Activated CD8-positive, alpha-beta T cell treated with anti-CD3 and anti-CD28 coated beads, Interleukin-2, amount 10 ng/mL, durations not matched to agents 7 days and 5 days (primary cell): ENCODE measurements at regions of chr12 and their contacts with region 1.

Region 1: GRCh38 chr12:57175428-57176138 is 28.2 kb upstream of the LRP1-AS start:
- DNase-seq: peak; percentile 55
- ATAC-seq: peak; percentile 45
- H3K4me3 Mint-ChIP-seq: no peak overlapping the region
- H3K27ac Mint-ChIP-seq: no peak overlapping the region
- H3K4me1 Mint-ChIP-seq: no peaks in the 10 kb centered on the region
- H3K27me3 Mint-ChIP-seq: no peaks in the 10 kb centered on the region

Region 2: DNA sequence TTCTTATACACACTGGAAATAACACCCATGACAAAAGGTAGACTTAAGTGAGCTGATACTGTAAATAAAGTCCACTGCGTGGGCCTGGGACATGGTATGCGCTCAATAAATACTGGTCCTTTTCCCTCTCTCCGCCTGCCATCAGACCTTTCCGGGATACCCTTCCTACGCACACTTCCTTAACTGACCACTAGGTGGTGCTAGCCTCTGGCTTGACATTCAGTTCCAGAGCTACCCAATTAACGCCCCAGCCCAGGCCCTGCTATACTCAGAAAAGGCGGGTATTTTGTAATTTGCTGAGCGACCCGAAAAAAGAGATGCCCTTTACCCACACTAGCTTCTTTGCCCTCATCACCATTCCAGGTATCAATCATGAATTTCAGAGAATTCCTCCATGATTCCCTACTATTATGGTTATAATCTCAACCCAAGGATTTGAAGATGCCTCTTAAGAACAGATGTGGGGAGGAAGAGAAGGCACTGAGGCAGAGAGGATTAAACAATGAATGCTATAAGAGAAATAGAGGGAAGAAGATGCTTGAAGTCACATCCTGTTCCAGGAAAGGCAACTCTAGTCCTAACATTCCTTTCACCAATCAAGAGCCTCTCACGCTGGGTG is 51.2 kb before region 1 on chr12:
- CTCF ChIA-PET with region 1: interaction called, 178 read pairs
- POLR2A ChIA-PET with region 1: no interaction called
- DNase-seq: peak; percentile 85
- ATAC-seq: peak; percentile 65
- H3K4me3 Mint-ChIP-seq: no peak overlapping the region
- H3K27ac Mint-ChIP-seq: no peak overlapping the region
- H3K4me1 Mint-ChIP-seq: peaks cover 5% of the 10 kb centered on the region
- H3K27me3 Mint-ChIP-seq: peaks cover 29% of the 10 kb centered on the region

Region 3: DNA sequence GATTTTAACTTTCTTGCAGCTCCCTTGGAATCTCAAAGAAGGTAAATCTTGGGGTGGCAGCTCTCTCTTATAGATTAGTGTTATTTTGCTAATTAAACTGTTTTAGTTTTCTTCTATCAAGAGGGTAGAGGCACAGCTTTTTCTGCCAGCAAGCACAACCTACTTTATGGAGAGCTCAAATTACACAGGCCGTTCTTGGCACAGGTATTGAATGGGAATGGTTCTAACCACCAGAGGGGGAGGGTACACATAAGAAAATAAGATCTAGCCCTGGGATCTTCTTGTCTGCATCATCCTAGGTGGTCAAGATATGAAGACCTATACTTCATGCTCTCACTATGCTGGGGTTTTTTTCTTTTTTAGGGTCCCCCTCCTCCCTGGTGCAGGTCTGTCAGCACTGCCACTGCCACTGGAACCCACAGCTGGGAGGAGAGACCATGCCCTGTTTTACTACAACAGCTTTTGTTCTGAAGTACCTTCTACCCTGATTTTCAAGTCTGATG is 124.0 kb after region 1 on chr12:
- CTCF ChIA-PET with region 1: no interaction called
- POLR2A ChIA-PET with region 1: no interaction called
- DNase-seq: no peak
- ATAC-seq: no peak
- H3K4me3 Mint-ChIP-seq: no peak overlapping the region
- H3K27ac Mint-ChIP-seq: no peak overlapping the region
- H3K4me1 Mint-ChIP-seq: no peaks in the 10 kb centered on the region
- H3K27me3 Mint-ChIP-seq: no peaks in the 10 kb centered on the region